ENCODE measurements at regions of chr5 and their contacts with region 1.

Region 1: DNA sequence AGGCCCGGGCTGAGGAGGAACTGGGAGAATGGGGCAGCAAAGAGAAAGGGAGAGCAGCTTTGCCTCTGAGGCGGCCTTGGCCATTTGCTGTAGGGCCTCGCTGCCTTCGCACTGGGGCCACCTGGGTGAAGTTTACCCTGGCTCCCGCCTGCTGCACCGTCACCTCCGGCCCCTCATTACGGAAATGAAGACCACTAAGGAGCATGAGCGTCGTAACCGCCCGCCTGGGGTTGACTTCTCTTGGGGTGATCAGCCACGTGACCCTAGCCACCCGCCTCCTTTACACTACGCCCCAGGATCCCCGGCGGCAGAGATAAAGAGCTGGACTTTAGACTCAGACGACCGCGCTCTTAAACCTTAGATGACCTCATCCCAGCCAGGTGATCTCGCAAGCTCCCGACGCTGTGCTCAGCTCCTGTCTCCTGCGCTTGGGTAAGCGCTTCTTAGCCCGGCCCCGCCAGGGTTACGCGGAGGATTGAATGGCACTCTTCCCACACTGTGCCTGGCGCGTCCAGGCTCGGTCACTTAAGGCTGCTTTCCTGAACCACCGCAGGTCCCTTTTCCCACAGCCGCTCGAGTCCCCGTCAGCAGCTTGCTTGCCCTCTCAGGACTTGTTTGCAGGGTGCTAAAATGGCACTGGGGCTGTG is 107.9 kb upstream of the LARP1 start:
- DNase-seq: no peak
- H3K4me3 Mint-ChIP-seq: peak overlapping the region; percentile 72
- H3K27ac Mint-ChIP-seq: no peak overlapping the region
- H3K4me1 Mint-ChIP-seq: peaks cover 16% of the 10 kb centered on the region
- H3K27me3 Mint-ChIP-seq: peaks cover 23% of the 10 kb centered on the region

Region 2: DNA sequence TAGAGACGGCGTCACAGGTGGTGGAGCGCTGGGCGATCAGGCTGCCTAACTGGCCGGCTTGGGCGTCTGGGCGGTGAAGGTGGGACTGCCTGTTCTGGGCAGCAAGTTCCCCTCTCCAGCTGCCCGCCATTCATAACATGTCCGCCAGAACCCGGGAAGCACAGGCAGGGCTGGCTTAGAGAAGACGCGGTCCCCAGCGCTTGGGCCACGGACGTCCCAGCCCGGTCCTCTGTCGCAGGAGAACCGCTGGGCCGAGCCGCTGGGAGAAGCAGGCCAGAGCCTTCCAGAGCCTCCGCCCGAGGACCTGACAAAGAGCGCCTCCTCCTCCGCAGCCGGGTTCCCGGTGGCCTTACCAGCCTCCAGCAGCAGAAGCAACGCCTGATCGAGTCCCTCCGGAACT is 154.0 kb before region 1 on chr5:
- intact Hi-C with region 1: no loop called
- DNase-seq: no peak
- H3K4me3 Mint-ChIP-seq: no peak overlapping the region
- H3K27ac Mint-ChIP-seq: no peak overlapping the region
- H3K4me1 Mint-ChIP-seq: no peaks in the 10 kb centered on the region
- H3K27me3 Mint-ChIP-seq: peaks cover 63% of the 10 kb centered on the region

Region 3: GRCh38 chr5:155004138-155004744 is 357.0 kb after region 1 on chr5:
- intact Hi-C with region 1: loop called (anchors 1 kb)
- DNase-seq: no peak
- H3K4me3 Mint-ChIP-seq: no peak overlapping the region
- H3K27ac Mint-ChIP-seq: no peak overlapping the region
- H3K4me1 Mint-ChIP-seq: no peaks in the 10 kb centered on the region
- H3K27me3 Mint-ChIP-seq: peaks cover 3% of the 10 kb centered on the region